ENCODE measurements at regions of chr7 and their contacts with region 1.

Region 1: DNA sequence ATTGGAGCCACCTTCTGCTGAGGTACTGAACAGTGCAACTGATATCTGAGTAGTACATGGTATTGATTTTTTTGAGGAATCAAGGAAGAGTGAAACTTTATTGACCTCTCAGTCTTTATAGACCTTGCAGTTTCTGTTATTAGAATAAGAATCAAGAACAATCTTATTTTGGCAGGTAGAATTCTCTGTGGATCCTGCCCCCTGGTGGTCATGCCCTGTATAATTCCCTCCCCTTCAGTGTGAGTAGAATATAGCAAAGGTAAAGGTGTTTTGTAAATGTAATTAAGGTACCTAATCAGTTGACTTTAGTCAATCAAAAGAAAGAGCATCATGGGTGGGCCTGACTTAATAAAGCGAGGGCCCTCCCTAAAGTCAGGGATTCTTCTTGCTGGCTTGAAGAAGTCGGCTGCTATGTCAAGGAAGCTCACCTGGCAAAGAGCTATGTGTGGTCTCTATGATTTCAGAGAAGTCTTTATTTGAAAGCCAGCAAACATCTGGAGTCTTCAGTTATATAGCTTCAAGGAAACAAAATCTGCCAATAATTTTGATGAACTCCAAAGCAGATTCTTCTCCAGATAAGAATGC is 142.8 kb downstream of the LSM5 start:
- DNase-seq: peak in 16 of 42 donors; percentile 9 to 75 (median 28)

Region 2: GRCh38 chr7:32212321-32212720 is 135.0 kb before region 1 on chr7:
- intact Hi-C with region 1: loop called (anchors 5 kb)
- DNase-seq: no peak